ENCODE measurements at regions of chr22 and their contacts with region 1.

Region 1: DNA sequence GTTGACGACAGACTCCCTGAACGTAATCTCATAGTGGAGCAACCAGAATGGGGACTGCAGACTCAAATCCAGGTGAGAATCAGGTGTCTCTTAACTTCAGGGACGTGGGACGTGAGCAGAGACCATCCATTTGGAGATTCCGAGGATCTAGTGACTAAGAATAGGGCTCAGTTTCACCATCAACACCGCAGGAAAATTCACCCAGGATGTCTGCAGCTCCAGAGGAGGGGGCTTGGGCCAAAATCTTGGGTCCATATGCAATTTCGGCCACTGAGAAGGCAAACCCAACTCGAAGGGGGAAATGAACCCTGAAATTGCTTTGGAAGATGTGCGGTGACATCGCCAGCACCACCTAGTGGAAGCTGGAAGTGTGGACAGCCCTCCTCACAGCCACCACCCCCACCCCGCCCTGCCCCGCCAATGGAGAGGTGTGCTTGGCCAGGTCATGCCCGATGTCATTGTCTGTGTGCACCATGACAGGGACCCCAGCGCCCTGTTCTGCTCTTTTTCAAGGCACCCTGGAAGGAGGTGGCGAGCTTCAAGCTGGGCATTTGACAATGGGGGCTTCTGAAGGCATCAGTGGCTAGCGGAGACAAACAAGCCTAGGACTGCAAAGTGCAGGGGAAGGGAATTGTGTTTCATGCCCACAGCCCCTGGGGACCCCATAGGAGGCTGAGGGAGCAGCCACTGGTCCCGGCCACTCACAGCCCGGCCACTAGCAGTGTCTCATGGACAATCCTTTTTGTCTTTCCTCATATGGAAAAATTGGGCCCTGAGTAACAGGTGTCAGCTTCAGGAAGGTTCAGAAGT is 24.8 kb downstream of the APOL1 start:
- DNase-seq: no peak
- ATAC-seq: peak; percentile 68

Region 2: DNA sequence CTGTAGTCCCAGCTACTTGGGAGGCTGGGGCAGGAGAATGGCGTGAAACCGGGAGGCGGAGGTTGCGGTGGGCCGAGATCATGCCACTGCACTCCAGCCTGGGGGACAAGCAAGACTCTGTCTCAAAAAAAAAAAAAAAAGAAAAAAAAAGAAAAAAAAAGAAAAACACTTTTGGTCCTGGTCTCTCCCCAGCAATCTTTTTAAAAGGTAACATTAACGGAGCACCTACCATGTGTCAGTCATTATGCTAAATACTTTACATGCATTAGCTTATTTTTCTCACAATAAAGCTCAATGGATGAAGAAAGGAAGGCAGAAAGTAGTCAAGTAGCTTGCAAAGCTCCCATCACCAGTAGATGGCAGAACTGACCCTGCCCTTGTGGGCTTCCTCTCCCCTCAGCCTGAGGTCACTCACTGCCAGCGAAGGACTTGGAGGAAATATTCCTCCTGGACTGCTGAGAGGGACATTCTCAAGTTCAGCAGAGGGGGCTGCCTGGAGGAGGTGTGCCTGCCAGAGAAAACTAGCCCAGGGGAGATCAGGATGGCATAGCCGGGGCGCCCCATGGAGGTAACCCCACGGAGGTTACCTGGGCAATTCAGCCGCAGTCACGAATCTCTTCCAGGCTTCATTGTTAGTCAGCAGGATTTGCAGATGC is 132.7 kb before region 1 on chr22:
- intact Hi-C with region 1: loop called (anchors 5 kb)
- DNase-seq: peak; percentile 69
- ATAC-seq: peak; percentile 86

Region 3: DNA sequence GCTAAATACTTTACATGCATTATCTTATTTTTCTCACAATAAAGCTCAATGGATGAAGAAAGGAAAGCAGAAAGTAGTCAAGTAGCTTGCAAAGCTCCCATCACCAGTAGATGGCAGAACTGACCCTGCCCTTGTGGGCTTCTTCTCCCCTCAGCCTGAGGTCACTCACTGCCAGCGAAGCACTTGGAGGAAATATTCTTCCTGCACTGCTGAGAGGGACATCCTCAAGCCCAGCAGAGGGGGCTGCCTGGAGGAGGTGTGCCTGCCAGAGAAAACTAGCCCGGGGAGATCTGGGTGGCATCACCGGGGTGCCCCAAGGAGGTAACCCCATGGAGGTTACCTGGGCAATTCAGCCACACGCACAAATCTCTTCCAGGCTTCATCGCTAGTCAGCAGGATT is 82.7 kb before region 1 on chr22:
- intact Hi-C with region 1: loop called (anchors 5 kb)
- DNase-seq: peak; percentile 62
- ATAC-seq: peak; percentile 53

Region 4: DNA sequence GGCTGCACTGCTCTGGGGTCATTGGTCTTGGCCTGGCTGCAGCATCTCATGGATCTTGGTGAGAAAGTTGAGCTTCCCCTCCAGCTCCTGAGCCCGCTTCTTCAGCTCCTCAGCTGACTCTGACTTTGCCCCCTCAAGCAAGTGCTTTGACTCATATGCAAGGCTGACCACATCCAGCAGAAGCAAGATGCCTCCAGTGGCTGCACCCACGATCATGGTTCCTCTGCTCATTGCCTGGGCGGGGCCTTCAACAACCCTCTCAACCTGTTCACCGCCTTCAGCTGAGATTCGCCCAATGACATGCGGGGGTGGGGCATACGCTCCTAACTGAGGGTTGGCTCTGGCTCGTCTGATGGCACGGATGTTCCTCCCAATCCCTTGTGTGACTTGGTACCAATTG is 50.3 kb before region 1 on chr22:
- intact Hi-C with region 1: loop called (anchors 5 kb)
- DNase-seq: no peak
- ATAC-seq: no peak

Region 5: DNA sequence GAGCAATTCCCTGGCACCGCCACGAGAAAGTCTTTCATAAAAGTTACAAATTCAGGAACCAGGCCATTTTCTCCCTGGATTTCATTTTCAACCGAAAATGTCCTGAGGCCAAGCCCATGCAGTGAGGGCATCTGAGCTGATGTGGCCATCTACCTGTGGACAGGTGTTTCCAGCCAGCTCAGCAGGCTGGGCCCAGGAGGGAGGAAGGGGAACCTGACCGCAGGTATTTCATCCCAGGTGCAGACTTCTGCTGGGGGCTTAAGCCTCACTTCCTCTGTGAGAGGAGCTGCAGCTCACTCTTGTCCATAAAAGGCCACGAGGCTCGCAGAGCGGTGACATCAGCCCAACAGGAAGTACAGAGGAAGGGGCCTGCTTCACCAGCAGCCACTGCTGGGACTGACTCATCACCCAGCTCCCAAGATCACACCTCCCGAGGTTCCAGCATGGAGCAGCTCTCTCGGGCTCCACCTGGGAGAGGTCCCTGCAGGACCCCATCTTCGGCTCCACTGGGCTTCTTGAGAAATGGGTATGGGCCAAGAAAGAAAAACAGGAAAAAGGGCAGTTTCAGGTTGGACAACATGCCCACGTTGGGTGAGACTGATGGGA is 53.7 kb after region 1 on chr22:
- intact Hi-C with region 1: no loop called
- DNase-seq: peak; percentile 89
- ATAC-seq: peak; percentile 17